Head of caudate nucleus (tissue), 42 donors: ENCODE measurements at regions of chr1 and their contacts with region 1.

Region 1: GRCh38 chr1:34859446-34860200 is at the start of gene SMIM12:
- DNase-seq: peak; percentile 85 to 98 (median 95)

Region 2: DNA sequence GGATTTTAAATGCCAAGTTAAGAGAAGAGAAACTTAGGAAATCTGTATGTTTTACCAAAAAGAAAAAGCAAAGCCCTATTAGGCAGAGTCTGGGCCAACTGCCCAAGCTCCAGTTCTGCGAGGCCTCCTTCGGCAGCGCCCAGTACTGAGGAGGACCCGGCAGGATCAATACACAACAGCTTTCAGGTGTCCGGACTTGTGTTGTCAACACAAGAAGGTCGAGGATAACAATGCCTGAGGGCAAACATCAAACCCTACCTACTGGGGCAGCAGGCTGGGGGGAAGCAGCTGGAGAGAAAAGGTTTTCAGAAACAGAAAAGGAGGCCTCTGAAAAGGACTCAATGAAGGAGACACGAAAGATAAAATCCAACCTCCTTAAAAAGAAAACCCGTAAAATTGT is 202.9 kb before region 1 on chr1:
- intact Hi-C with region 1: no loop called
- DNase-seq: no peak

Region 3: GRCh38 chr1:34984793-34985608 is 125.4 kb after region 1 on chr1 and contains the start of gene TMEM35B:
- intact Hi-C with region 1: loop called (anchors 10 kb)
- DNase-seq: peak; percentile 4 to 86 (median 70)

Region 4: GRCh38 chr1:35180776-35181374 is 321.3 kb after region 1 on chr1:
- intact Hi-C with region 1: loop called (anchors 10 kb)
- DNase-seq: peak in 10 of 42 donors; percentile 18 to 67 (median 30)

Region 5: DNA sequence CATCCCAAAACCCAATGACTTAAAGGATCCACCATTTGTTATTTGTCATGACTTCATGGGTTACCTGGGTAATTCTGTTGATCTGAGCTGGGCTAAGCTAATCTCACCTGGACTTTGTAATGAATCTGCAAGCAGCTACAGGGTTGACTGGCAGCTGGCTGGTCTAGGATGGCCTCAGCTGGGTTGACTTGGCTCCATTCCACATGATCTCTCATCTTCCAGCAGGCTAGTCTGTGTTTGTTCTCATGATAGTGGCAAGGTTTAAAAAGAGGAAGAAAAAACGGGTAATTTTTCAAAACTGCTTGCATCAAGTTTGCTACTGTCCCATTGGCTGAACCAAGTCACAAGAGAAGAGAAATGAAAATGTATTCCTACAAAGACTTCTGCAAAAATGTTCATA is 384.1 kb after region 1 on chr1:
- intact Hi-C with region 1: no loop called
- DNase-seq: peak in 1 of 42 donors; percentile 2